ENCODE measurements at regions of chr3 and their contacts with region 1.

Region 1: DNA sequence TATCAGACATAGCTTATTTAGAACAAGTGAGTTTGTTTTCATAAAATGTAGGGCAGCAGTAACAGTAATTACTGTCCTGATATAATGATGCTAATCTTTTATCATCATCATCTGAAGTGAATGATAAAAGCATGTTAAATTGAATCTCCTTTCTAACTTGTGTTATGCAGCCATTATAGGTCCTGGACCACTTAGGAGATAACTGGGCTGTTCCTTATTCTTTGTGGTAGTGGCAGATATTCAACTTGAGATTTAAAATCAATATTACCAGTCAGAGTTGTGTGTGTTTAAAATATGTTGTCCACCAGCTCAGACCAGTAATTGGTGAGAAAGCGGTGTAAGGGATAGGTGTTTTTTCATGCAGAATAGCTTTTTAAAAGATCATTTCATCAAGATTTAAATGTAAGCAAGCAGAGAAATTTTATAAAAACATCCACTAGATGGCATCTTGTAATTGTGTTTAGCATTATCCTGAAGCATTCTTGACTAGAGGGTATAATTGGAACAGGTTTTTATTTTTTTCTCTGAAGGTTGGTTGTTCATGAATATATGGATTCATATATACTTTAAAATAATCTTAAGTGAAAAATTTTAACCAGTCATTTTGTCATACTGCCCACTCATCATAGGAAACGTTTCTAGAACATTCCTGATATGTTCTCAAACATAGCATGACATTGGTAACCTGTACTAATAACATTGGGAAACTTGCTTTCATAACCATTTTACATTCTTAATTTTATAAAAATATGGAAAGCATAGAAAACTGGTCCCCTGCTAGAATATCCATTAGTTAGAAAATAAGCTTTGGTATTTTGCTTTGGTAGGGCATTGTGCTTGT is 153.9 kb downstream of the BBX start:
- DNase-seq: peak; percentile 34 to 67 (median 61)
- H3K4me3 ChIP-seq: no peak overlapping the region
- H3K27ac ChIP-seq: no peak overlapping the region
- H3K4me1 ChIP-seq: peaks cover 9 to 17% (median 13%) of the 10 kb centered on the region in 4 experiments
- H3K27me3 ChIP-seq: no peaks in the 10 kb centered on the region

Region 2: GRCh38 chr3:107660306-107660976 is 16.2 kb before region 1 on chr3:
- CTCF ChIA-PET with region 1: interaction called, 28 read pairs
- POLR2A ChIA-PET with region 1: interaction called, 3 read pairs
- DNase-seq: peak; percentile 35 to 71 (median 63)
- H3K4me3 ChIP-seq: no peak overlapping the region
- H3K27ac ChIP-seq: no peak overlapping the region
- H3K4me1 ChIP-seq: no peaks in the 10 kb centered on the region
- H3K27me3 ChIP-seq: no peaks in the 10 kb centered on the region

Region 3: GRCh38 chr3:107690522-107691138 is 13.9 kb after region 1 on chr3:
- CTCF ChIA-PET with region 1: interaction called, 64 read pairs
- POLR2A ChIA-PET with region 1: no interaction called
- DNase-seq: peak; percentile 72 to 88 (median 86)
- H3K4me3 ChIP-seq: no peak overlapping the region
- H3K27ac ChIP-seq: no peak overlapping the region
- H3K4me1 ChIP-seq: no peaks in the 10 kb centered on the region
- H3K27me3 ChIP-seq: no peaks in the 10 kb centered on the region

Region 4: GRCh38 chr3:107727102-107727501 is 50.4 kb after region 1 on chr3:
- CTCF ChIA-PET with region 1: interaction called, 10 read pairs
- POLR2A ChIA-PET with region 1: no interaction called
- DNase-seq: no peak
- H3K4me3 ChIP-seq: no peak overlapping the region
- H3K27ac ChIP-seq: no peak overlapping the region
- H3K4me1 ChIP-seq: no peaks in the 10 kb centered on the region
- H3K27me3 ChIP-seq: no peaks in the 10 kb centered on the region

Region 5: DNA sequence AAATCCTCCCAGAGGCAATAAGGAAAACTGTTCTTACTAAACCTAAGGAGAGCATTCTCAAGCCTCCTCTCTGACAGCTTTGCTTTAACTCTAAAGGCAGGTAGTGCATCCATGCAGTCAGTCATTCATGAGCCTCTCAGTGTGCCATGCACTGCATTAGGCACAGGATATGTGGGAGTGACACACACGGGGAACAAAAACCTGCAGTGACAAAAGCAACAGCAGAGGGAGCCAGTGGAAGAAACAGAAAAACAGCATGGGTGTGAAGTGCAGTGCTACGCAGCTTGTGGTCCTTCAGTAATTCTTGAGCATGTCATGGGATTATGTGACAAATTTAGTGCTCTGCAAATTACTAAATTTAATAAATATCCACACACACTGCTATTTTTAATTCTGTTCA is 76.8 kb after region 1 on chr3:
- CTCF ChIA-PET with region 1: interaction called, 10 read pairs
- POLR2A ChIA-PET with region 1: no interaction called
- DNase-seq: peak; percentile 24 to 59 (median 57)
- H3K4me3 ChIP-seq: no peak overlapping the region
- H3K27ac ChIP-seq: no peak overlapping the region
- H3K4me1 ChIP-seq: no peaks in the 10 kb centered on the region
- H3K27me3 ChIP-seq: no peaks in the 10 kb centered on the region

Measured in common myeloid progenitor, CD34-positive (primary cell).